ENCODE measurements at regions of chr19 and their contacts with region 1.

Region 1: DNA sequence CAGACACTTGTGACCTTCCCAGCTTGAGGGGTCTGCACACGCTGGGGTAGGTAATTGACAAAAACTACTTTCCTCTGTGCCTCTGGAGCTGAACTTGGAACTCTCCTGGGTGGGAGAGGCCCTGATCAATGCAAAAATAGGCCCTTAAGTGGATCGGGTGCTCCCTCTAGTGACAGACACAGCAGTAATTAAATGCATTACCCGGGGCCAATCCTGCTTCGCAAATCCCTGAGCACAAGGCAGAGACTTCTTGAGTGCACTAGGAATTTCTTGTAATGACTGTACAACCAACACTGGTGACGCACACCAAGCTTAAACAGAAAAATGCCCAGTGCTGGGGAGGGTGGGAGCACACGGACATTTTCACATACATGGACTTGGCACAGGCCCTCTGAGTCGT is 10.6 kb upstream of the UBE2S start:
- DNase-seq: peak; percentile 74
- ATAC-seq: peak; percentile 99
- H3K4me3 ChIP-seq: no peak overlapping the region
- H3K27ac ChIP-seq: no peak overlapping the region
- H3K4me1 ChIP-seq: peaks cover 2 to 6% of the 10 kb centered on the region in 2 experiments; a peak in 1 of 4 replicates
- H3K27me3 ChIP-seq: no peaks in the 10 kb centered on the region
- CTCF ChIP-seq: peak; percentile 69 to 87 (median 80)
- POLR2A ChIP-seq: no peak
- RAD21 ChIP-seq: peak; percentile 97

Region 2: DNA sequence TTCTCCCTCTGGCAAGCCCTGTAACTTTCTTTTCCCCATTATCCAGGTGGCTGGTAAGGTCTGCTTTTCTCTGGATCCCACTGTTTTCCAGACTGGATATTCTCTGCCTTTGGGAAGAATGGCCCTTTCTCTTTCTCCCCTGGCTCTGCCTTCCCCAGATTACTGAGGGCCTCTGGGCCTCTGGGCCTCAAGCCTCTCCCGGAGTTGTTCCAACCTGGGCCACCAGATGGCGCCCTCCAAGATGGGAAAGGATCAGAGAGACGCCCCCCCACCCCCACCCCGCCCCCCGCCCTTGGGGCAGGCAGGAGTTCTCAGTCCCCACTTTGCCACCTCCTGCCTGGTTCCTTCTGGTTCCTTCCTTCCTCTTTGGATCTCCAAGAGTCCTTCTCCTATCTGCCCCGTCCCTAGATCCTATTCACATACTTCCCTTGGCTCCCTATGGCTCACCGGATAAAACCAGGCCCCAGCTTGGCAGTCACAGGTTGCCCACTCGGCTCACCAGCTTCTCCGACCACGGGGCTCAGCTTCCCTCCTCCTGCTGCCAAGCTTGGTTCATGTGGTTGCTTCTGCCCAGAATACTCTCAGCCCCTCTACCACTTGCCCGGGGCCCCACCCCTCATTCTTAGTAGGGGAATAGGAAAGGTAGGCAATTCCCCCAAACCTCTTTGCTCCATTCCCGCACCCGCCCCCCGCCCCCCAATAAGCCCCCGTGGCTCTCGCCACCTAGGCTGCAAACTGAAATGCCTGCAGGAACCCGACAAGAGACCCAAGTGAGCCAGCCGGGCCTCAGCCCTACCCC is 329.4 kb before region 1 on chr19:
- CTCF ChIA-PET with region 1: interaction called, 5 read pairs
- POLR2A ChIA-PET with region 1: no interaction called
- RAD21 ChIA-PET with region 1: no interaction called
- intact Hi-C with region 1: loop called (anchors 1 kb)
- DNase-seq: no peak
- ATAC-seq: peak; percentile 74
- H3K4me3 ChIP-seq: no peak overlapping the region
- H3K27ac ChIP-seq: peak overlapping the region; percentile 28; the same call in 1 of the 2 replicates
- H3K4me1 ChIP-seq: peaks cover 0 to 3% of the 10 kb centered on the region in 2 experiments; a peak in 1 of 4 replicates
- H3K27me3 ChIP-seq: no peaks in the 10 kb centered on the region
- CTCF ChIP-seq: peak in 2 of 3 experiments; percentile 54 to 70; a peak in 4 of 6 replicates
- POLR2A ChIP-seq: no peak
- RAD21 ChIP-seq: no peak

Measured in HCT116 (cell line).